ENCODE measurements at regions of chr3 and their contacts with region 1.

Region 1: GRCh38 chr3:88113311-88114162 is 36.2 kb upstream of the C3orf38 start:
- DNase-seq: peak; percentile 71
- H3K4me3 Mint-ChIP-seq: no peak overlapping the region
- H3K27ac Mint-ChIP-seq: no peak overlapping the region
- H3K4me1 Mint-ChIP-seq: peaks cover 20% of the 10 kb centered on the region
- H3K27me3 Mint-ChIP-seq: no peaks in the 10 kb centered on the region

Region 2: GRCh38 chr3:87313641-87314040 is 799.9 kb before region 1 on chr3:
- CTCF ChIA-PET with region 1: no interaction called
- intact Hi-C with region 1: loop called (anchors 1 kb)
- DNase-seq: peak; percentile 16
- H3K4me3 Mint-ChIP-seq: no peak overlapping the region
- H3K27ac Mint-ChIP-seq: no peak overlapping the region
- H3K4me1 Mint-ChIP-seq: peaks cover 18% of the 10 kb centered on the region
- H3K27me3 Mint-ChIP-seq: peaks cover 3% of the 10 kb centered on the region

Region 3: DNA sequence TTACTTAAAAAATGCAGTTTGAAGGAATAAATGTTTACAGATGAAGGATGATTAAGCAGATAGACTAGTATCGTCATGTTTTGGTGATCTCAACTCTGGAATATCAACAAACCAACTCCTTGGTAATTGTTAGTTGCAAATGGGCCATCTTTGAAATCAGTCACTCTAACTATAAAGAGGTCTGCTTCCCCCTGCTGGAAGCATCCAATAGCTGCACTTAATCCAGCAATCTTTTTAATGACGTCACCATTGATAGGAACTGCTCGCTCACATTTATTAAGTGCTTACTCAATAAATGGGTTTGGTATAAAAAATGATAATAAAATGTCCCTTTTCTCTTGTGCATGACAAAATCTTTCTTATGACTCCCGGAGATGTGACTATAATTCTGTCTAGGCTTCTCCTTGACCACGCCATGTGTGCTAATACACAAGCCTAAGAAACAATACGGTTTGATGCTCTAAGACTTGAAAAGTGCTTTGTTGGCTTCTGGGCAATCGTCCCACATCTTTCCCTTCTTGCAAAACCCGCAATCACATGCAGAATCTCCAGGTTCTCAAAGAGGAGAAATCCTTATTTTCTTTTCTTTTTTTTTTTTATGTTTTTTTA is 609.5 kb before region 1 on chr3:
- CTCF ChIA-PET with region 1: no interaction called
- intact Hi-C with region 1: loop called (anchors 10 kb)
- DNase-seq: peak; percentile 22
- H3K4me3 Mint-ChIP-seq: no peak overlapping the region
- H3K27ac Mint-ChIP-seq: no peak overlapping the region
- H3K4me1 Mint-ChIP-seq: no peaks in the 10 kb centered on the region
- H3K27me3 Mint-ChIP-seq: no peaks in the 10 kb centered on the region

Region 4: DNA sequence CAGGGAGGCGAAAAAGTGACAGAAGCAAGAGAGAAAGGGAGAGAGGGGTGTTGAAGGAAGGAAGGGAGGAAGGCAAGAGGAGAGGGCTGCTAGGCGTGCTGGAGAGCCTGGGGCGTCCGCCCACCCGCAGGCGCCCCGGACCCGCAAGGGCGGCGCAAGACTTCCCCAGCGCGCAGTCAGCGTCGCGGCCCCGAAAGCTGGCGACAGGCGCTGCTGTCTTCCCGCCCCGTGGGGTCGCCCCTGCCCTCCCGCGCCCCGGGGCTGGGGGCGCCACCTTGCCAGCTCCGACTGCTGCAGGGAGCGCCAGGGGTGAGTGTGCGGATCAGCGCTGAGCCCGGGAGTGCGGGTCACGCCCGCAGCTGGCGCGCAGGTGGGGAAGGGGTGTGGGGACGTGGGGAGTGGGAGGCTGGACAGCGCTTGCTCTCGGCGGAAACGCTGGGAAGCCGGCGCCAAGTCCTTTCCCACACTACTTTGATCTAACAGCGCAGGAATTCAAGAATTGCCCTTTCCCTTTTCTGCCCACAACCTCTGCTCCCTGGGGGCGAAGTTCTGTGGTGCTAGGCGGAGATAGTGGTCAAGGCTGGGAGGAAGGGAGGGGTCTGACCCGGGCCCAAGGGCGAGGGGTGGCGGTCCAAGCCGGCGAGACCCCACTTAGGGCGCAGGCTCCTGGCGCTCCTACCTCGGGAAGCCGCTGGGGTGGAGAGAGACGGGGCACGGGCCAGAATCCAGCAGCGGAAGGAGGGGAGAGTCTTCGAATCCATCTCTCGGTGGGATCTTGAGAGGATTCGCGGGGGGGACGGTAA is 320.8 kb before region 1 on chr3:
- CTCF ChIA-PET with region 1: no interaction called
- intact Hi-C with region 1: loop called (anchors 5 kb)
- DNase-seq: peak; percentile 30
- H3K4me3 Mint-ChIP-seq: peak within 1 kb of the TSS; percentile 64
- H3K27ac Mint-ChIP-seq: no peak within 1 kb of the TSS
- H3K4me1 Mint-ChIP-seq: peaks cover 26% of the 10 kb centered on the region
- H3K27me3 Mint-ChIP-seq: peaks cover 69% of the 10 kb centered on the region

Region 5: GRCh38 chr3:88003115-88003755 is 110.3 kb before region 1 on chr3:
- CTCF ChIA-PET with region 1: interaction called, 14 read pairs
- intact Hi-C with region 1: loop called (anchors 1 kb)
- DNase-seq: peak; percentile 7
- H3K4me3 Mint-ChIP-seq: no peak overlapping the region
- H3K27ac Mint-ChIP-seq: no peak overlapping the region
- H3K4me1 Mint-ChIP-seq: no peaks in the 10 kb centered on the region
- H3K27me3 Mint-ChIP-seq: no peaks in the 10 kb centered on the region

Region 6: GRCh38 chr3:88031642-88032077 is 81.9 kb before region 1 on chr3:
- CTCF ChIA-PET with region 1: interaction called, 11 read pairs
- intact Hi-C with region 1: no loop called
- DNase-seq: no peak
- H3K4me3 Mint-ChIP-seq: peak overlapping the region; percentile 77
- H3K27ac Mint-ChIP-seq: peak overlapping the region; percentile 72
- H3K4me1 Mint-ChIP-seq: peaks cover 25% of the 10 kb centered on the region
- H3K27me3 Mint-ChIP-seq: no peaks in the 10 kb centered on the region

Region 7: DNA sequence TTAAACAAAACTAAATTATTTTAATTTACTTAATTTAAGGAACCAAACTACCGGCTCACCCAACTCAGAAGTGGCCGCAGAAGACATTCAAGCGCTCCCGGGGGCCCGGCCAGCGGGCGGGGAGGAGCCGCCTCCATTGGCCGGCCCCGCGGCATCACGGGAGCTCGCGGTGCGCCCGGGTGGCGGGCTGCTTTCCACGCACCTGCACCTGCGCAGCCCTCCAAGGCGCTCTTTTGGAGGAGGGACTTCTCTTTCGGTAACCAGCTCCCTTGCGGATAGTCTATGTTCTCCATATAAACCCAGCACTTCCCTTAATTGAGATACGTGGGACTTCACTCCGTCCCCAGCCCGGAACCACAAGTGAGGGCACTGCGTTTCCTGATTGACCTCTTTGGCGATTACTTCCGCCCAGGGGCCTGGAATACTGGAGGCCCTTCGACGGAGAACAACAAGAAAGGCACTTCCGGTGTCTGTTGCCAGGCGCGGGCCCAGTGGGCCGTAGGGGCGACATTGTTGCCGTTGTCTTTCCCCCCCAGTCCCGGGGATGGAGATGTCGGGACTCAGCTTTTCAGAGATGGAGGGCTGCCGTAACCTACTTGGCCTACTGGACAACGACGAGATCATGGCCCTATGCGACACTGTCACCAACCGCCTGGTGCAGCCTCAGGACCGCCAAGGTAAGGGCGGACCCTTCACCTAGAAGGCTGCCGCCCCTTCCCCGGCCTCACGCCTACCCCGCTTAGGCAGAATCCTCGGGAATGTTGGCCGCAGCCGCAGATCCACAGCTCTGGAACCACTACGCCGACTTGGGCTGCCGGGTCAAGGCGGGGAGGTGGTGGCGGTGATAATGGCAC is 36.2 kb after region 1 on chr3 and contains the start of gene C3orf38:
- CTCF ChIA-PET with region 1: interaction called, 3 read pairs
- intact Hi-C with region 1: loop called (anchors 1 kb)
- DNase-seq: peak; percentile 82
- H3K4me3 Mint-ChIP-seq: peak within 1 kb of the TSS; percentile 88
- H3K27ac Mint-ChIP-seq: peak within 1 kb of the TSS; percentile 98
- H3K4me1 Mint-ChIP-seq: peaks cover 29% of the 10 kb centered on the region
- H3K27me3 Mint-ChIP-seq: peaks cover 2% of the 10 kb centered on the region
- total RNA-seq, gene C3orf38: 16.0 to 16.7 TPM

Measured in activated naive CD4-positive, alpha-beta T cell treated with anti-CD3 and anti-CD28 coated beads for 36 hours (primary cell).